Motor neuron (in vitro differentiated cells): ENCODE measurements at regions of chr17 and their contacts with region 1.

Region 1: DNA sequence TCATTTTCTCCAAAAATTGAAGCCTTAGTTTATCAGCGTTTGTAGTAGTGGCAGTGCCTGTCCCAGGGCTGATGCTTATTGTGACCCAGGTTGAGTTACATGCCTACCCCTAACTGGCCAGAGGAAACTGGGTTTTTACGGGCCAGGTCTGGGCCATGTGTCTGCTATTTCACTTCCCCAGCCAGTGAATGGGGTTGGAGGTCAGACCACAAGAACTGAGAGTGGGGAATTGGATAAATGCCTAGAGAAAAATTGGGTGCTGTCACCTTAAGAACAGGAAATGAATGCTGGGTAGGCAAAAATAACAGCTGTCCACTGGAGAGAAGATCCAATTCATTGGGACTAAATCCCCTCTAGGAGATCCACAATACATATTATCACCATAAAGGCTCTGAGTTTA is 5.2 kb downstream of the ADPRM start:
- ATAC-seq: no peak
- H3K4me3 ChIP-seq: no peak overlapping the region
- H3K27ac ChIP-seq: no peak overlapping the region
- H3K4me1 ChIP-seq: peaks cover 0 to 5% of the 10 kb centered on the region in 2 donors

Region 2: DNA sequence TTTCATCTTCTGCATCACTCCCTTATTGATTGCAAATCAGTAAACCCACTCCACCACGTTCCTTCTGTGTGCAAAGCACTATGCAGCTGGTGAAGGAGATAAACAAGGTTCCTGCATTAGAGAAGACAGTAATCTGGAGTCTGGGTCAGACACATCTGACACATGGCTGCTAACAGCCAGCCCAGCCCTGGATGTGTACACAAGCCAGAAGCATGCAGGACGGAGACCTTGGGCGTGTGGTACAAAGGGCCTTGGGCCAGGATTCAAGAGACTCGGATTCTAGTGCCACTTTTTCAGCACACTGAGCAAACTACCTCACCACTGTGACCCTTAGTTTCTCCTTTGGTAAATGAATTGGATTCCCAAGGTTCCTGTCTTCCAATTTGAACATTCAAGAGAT is 809.1 kb after region 1 on chr17:
- in situ Hi-C with region 1: no loop called
- ATAC-seq: peak in 2 of 8 experiments; percentile 41 to 52
- H3K4me3 ChIP-seq: no peak overlapping the region
- H3K27ac ChIP-seq: no peak overlapping the region
- H3K4me1 ChIP-seq: peaks cover 2 to 11% of the 10 kb centered on the region in 2 donors

Region 3: GRCh38 chr17:11997147-11997846 is 1294.7 kb after region 1 on chr17 and contains the start of gene ZNF18:
- in situ Hi-C with region 1: loop called in 1 of 9 experiments (anchors 25 kb)
- ATAC-seq: peak; percentile 91 to 97 (median 94)
- H3K4me3 ChIP-seq: peak within 1 kb of the TSS; percentile 62 to 84 (median 67)
- H3K27ac ChIP-seq: peak within 1 kb of the TSS; percentile 87 to 90
- H3K4me1 ChIP-seq: peaks cover 4% of the 10 kb centered on the region in 2 donors
- total RNA-seq, gene ZNF18: 7.6 to 18.2 (median 12.3) TPM